CD14-positive monocyte (primary cell): ENCODE measurements at regions of chr17 and their contacts with region 1.

Region 1: DNA sequence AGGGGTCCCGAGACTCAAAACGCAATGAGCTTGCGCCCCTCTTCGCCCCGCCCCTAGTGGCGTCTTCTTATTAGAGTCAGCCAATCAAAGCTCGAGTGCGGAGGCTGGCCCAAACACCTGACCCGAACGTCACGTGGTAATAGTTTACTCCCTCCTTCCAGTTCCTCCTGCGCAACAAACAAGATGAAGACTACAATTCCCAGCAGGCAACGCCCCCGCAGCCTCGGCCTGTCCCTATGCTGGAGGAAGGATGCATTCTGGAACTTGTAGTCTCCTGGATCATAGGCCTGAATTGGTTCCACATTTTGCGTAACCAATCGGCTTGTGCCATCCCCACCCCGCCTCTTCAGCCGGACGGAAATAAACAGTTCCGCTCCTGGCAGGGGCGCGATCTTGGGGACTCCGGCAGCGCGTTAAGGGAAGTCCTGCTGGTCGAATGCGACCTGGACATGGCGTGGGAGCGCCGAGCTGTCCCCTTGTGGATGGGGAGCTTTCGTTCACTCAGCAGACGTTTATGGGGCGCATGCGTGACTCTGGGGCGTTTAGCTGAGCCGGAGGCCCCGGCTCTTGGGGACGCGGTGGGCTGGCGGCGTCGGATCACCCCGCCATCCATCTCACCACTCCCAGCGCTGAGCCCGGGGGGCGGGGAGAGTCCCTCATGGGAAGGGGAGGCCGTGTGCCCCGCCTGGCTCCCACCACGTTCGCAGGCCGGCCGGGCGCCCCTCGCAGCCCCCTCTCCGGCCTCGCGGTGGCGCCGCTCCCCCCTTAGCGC is at the start of gene WBP2:
- DNase-seq: peak; percentile 100
- H3K4me3 ChIP-seq: peak within 1 kb of the TSS; percentile 67 to 95 (median 89)
- H3K4me3 Mint-ChIP-seq: no peak within 1 kb of the TSS
- H3K27ac ChIP-seq: peak within 1 kb of the TSS; percentile 84 to 91
- H3K27ac Mint-ChIP-seq: peak within 1 kb of the TSS in 6 of 7 donors; percentile 83 to 96 (median 94)
- H3K4me1 ChIP-seq: peaks cover 50 to 57% of the 10 kb centered on the region in 2 donors
- H3K4me1 Mint-ChIP-seq: peaks cover 41% of the 10 kb centered on the region
- H3K27me3 ChIP-seq: no peaks in the 10 kb centered on the region
- H3K27me3 Mint-ChIP-seq: peaks cover 0 to 4% (median 0%) of the 10 kb centered on the region in 3 donors
- CTCF ChIP-seq: peak; percentile 34
- polyA plus RNA-seq, gene WBP2: 62.4 to 93.3 (median 67.9) TPM

Region 2: DNA sequence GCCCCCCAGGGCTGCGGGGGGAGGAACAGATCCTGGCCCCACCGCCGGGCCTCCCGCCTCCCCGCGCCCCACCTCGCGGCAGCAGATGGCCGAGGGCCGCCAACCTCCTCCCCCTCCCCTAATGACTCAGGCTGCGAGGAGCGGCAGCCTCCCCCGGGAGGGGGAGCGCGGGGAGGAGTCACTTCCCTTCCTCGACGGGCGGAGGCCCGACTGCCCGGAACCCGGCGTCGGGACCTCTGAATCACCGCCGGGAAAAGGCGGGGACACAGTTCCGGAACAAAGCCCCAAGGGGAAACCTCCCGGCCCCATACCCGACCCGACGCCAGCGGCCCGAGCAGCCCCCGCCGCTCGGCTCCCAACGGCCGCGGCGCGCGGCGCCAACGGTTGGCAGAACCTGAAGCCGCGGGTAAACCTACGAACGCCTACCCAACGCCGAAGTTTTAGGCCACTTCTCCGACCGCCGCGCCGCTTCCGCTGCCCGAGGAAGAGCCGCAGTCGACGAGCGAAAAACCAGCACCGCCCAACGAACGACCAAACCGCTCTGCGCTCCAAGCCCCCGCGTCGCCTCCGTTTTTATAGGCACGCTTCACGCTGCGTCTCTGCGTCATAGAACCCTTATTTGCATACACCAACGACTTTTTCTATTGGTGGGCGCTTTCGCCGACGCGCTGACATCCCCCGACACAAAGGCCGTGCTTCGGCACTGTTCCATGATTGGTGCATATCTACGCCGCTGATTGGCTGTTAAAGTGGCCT is 76.1 kb before region 1 on chr17:
- intact Hi-C with region 1: loop called in 1 of 2 experiments (anchors 5 kb)
- DNase-seq: peak; percentile 99
- H3K4me3 ChIP-seq: peak overlapping the region; percentile 67 to 99 (median 96)
- H3K4me3 Mint-ChIP-seq: peak overlapping the region; percentile 93 to 99
- H3K27ac ChIP-seq: peak overlapping the region; percentile 93 to 95
- H3K27ac Mint-ChIP-seq: peak overlapping the region; percentile 96 to 99 (median 98)
- H3K4me1 ChIP-seq: peaks cover 46 to 60% of the 10 kb centered on the region in 2 donors
- H3K4me1 Mint-ChIP-seq: peaks cover 42% of the 10 kb centered on the region
- H3K27me3 ChIP-seq: no peaks in the 10 kb centered on the region
- H3K27me3 Mint-ChIP-seq: peaks cover 0 to 2% (median 1%) of the 10 kb centered on the region in 3 donors
- CTCF ChIP-seq: peak; percentile 33

Region 3: DNA sequence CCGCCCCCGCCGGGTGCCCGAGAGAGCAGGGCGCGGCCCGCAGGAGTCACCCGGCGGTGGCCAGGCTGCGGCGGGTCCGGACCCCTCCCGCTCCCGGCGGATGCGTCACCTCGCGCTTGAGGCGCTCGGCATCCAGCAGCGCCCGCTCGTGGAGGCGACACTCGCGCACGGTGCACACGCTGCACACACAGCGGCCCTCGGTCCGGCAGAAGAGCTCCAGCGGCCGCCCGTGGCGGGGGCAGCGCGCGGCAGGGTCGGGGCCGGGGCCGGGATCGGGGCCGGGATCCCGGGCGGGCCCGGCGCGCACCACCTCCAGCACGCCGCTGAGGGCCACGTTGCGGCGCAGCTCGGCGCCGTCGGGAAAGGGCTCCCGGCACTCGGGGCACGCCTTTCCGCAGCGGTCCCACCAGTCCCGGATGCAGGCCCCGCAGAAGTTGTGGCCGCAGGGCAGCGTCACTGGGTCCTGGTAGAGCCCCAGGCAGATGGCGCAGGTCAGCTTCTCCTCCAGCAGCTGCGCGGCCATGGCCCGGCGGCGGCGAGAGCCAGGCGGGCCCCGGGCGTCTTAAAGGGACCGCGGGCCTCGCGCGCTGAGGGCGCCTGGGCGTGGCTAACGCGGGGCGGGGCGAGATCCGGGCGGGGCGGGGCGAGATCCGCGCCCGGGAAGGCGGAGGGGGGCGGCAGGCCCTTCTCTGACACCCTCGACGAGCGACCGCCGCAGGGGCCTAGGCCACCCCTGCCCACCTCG is 41.1 kb after region 1 on chr17 and contains the start of gene TRIM65:
- intact Hi-C with region 1: loop called in 1 of 2 experiments (anchors 5 kb)
- DNase-seq: peak; percentile 80 to 83 (median 83)
- H3K4me3 ChIP-seq: peak within 1 kb of the TSS; percentile 55 to 82 (median 80)
- H3K4me3 Mint-ChIP-seq: peak within 1 kb of the TSS; percentile 80 to 90
- H3K27ac ChIP-seq: peak within 1 kb of the TSS; percentile 24 to 79
- H3K27ac Mint-ChIP-seq: peak within 1 kb of the TSS; percentile 79 to 95 (median 91)
- H3K4me1 ChIP-seq: peaks cover 18 to 23% of the 10 kb centered on the region in 2 donors
- H3K4me1 Mint-ChIP-seq: peaks cover 22% of the 10 kb centered on the region
- H3K27me3 ChIP-seq: no peaks in the 10 kb centered on the region
- H3K27me3 Mint-ChIP-seq: peaks cover 0 to 5% (median 2%) of the 10 kb centered on the region in 3 donors
- CTCF ChIP-seq: peak; percentile 46
- polyA plus RNA-seq, gene TRIM65: 5.6 to 10.4 (median 5.9) TPM

Region 4: GRCh38 chr17:76072148-76072858 is 216.8 kb after region 1 on chr17 and contains the start of gene SRP68:
- intact Hi-C with region 1: no loop called
- DNase-seq: peak; percentile 82 to 87 (median 85)
- H3K4me3 ChIP-seq: peak within 1 kb of the TSS; percentile 82 to 94 (median 89)
- H3K4me3 Mint-ChIP-seq: peak within 1 kb of the TSS; percentile 93 to 96
- H3K27ac ChIP-seq: peak within 1 kb of the TSS; percentile 41 to 87
- H3K27ac Mint-ChIP-seq: peak within 1 kb of the TSS; percentile 79 to 92 (median 87)
- H3K4me1 ChIP-seq: peaks cover 48 to 58% of the 10 kb centered on the region in 2 donors
- H3K4me1 Mint-ChIP-seq: peaks cover 46% of the 10 kb centered on the region
- H3K27me3 ChIP-seq: peaks cover 32 to 40% of the 10 kb centered on the region in 2 donors
- H3K27me3 Mint-ChIP-seq: peaks cover 39 to 40% (median 39%) of the 10 kb centered on the region in 3 donors
- CTCF ChIP-seq: no peak
- polyA plus RNA-seq, gene SRP68: 27.4 to 47.1 (median 42.1) TPM